ENCODE measurements at regions of chr19 and their contacts with region 1.

Region 1: DNA sequence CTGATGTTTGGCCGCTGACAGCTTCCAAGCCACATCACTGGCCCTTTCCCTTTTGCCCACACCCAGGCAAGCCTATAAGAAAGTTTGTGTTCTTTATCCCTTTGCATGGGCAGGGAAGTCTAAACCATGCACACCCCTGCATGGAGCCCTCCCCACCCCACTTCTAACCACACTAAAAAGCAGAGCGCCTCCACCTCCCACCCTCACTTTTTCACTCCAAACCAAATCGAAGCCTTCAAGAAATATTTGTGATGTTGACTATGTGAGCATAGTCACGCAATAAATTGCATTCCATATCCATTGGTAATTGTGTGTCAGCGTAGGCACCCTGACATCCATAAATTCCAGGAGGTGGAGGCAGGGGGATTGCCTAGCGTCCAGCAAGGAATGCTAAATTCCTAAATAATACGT is 104.4 kb upstream of the LSM14A start:
- DNase-seq: no peak
- H3K4me3 ChIP-seq: no peak overlapping the region
- H3K27ac ChIP-seq: no peak overlapping the region
- H3K4me1 ChIP-seq: 0 out of 7 replicates have a peak, but pooled peaks cover 0 to 3% (median 0%) of the 10 kb centered on the region in 4 experiments
- H3K27me3 ChIP-seq: no peaks in the 10 kb centered on the region
- CTCF ChIP-seq: no peak
- EP300 ChIP-seq: no peak
- POLR2A ChIP-seq: no peak
- RAD21 ChIP-seq: no peak

Region 2: DNA sequence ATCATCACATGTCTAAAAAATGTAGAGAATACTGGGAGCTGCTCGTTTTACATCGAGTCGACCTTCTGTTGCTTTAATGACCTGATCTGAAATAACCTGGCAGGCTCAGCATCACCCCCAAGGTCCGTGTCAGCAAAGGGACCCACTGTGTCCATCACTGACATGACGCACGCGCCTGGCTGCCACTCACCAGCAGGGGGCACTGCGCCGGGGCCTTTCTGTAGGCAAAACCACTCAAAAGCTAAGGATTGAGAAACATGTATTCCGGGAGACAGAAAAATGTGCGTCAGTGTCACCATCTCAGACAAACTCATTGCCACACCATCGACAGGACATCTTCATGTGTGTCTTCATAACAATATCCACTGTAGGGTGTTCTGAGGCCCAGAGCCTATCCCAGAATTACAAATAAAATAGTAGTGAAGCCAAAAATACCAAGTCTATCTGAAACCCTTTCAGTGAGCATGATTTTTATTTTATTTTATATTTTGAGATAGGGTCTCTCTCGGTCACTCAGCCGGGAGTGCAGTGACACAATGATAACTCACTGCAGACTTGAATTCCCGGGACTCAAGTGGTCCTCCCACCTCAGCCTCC is 25.8 kb before region 1 on chr19:
- CTCF ChIA-PET with region 1: interaction called, 12 read pairs
- POLR2A ChIA-PET with region 1: no interaction called
- DNase-seq: peak; percentile 25 to 95
- H3K4me3 ChIP-seq: no peak overlapping the region
- H3K27ac ChIP-seq: no peak overlapping the region
- H3K4me1 ChIP-seq: no peaks in the 10 kb centered on the region
- H3K27me3 ChIP-seq: no peaks in the 10 kb centered on the region
- CTCF ChIP-seq: peak; percentile 91 to 97 (median 91)
- EP300 ChIP-seq: no peak
- POLR2A ChIP-seq: no peak
- RAD21 ChIP-seq: peak; percentile 69 to 84